ENCODE measurements at regions of chr17 and their contacts with region 1.

Region 1: DNA sequence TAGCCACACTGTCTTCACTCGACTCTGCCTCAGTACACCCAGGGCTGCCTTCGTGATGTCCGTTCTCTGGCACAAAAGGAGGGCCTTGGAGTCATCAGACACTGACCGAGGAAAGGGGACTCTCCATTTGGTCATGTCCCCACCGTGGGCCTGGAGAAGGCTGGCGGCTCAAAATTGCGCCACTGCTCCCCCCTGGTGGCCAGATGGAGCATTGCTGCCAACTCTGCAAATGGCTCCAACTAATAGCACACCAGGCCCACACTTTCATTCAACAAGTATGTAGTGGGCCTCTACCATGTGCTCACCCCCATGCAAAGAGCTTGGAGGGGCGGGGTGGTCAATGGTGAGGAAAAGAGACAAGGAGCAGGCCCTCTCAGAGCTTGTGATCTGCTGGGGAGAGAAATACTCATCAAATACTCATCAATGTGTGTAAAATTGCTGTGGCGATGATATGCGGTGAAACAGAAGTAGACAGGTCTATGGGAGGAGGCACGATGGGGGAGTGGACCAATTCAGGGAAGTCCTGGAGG is 5.2 kb upstream of the GRIN2C start:
- DNase-seq: peak; percentile 83
- ATAC-seq: peak; percentile 75
- H3K4me3 Mint-ChIP-seq: no peak overlapping the region
- H3K27ac Mint-ChIP-seq: no peak overlapping the region
- H3K4me1 Mint-ChIP-seq: peaks cover 18% of the 10 kb centered on the region
- H3K27me3 Mint-ChIP-seq: peaks cover 17% of the 10 kb centered on the region
- CTCF ChIP-seq: peak; percentile 90

Region 2: DNA sequence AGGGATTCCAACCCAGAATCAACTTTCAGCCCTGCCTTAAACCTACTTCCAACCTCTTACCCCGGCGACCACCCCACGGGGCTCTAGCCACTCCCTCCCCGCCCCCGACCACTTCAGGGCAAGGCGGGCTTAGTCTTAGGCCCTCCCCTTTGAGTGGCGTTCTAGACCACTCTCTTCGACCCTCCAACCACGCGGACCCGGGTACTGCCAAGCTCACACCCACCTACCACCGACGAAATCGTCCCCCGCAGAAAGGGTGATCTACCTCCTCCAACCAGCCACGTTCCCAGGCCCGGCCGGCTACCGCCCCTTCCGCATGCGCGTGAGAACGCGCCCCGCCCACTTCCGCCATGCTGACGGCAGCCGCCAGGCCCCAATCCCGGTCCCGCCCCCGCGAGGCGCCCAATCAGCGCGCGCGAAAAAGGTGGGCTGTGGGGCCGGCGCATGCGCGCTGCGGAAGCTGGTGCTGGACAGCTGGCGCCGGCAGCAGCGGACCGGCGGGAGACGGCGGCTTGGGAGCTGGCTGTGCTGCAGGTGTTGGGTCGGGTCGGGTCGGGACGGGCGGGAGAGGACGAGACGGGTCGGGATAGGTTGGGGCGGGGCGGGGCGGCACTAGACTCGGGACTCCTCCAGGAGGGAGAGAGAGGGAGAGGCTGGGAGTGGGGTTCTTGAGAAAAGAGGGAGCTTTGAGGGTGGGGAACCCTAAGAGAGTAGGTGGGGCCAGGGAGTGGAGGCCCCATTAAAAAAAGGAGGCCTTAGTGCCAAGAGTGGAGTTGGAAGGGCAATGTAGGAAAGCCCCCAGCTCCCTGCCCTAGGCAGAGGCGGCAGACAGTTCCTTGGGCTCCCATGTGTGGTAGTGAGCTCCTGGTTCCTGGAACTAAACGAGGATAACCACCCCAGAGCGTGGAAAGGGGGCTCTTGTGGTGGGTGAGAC is 88.6 kb before region 1 on chr17 and contains the start of gene NAT9:
- CTCF ChIA-PET with region 1: interaction called, 10 read pairs
- POLR2A ChIA-PET with region 1: no interaction called
- intact Hi-C with region 1: no loop called
- DNase-seq: peak; percentile 98
- ATAC-seq: peak; percentile 75
- H3K4me3 Mint-ChIP-seq: peak within 1 kb of the TSS; percentile 100
- H3K27ac Mint-ChIP-seq: peak within 1 kb of the TSS; percentile 96
- H3K4me1 Mint-ChIP-seq: peaks cover 57% of the 10 kb centered on the region
- H3K27me3 Mint-ChIP-seq: no peaks in the 10 kb centered on the region
- CTCF ChIP-seq: no peak
- total RNA-seq, gene NAT9: 35.5 to 42.4 TPM

Region 3: GRCh38 chr17:74785096-74785980 is 79.6 kb before region 1 on chr17:
- CTCF ChIA-PET with region 1: interaction called, 247 read pairs
- POLR2A ChIA-PET with region 1: interaction called, 3 read pairs
- intact Hi-C with region 1: no loop called
- DNase-seq: peak; percentile 65
- ATAC-seq: peak; percentile 68
- H3K4me3 Mint-ChIP-seq: no peak overlapping the region
- H3K27ac Mint-ChIP-seq: peak overlapping the region; percentile 47
- H3K4me1 Mint-ChIP-seq: peaks cover 54% of the 10 kb centered on the region
- H3K27me3 Mint-ChIP-seq: no peaks in the 10 kb centered on the region
- CTCF ChIP-seq: no peak

Region 4: DNA sequence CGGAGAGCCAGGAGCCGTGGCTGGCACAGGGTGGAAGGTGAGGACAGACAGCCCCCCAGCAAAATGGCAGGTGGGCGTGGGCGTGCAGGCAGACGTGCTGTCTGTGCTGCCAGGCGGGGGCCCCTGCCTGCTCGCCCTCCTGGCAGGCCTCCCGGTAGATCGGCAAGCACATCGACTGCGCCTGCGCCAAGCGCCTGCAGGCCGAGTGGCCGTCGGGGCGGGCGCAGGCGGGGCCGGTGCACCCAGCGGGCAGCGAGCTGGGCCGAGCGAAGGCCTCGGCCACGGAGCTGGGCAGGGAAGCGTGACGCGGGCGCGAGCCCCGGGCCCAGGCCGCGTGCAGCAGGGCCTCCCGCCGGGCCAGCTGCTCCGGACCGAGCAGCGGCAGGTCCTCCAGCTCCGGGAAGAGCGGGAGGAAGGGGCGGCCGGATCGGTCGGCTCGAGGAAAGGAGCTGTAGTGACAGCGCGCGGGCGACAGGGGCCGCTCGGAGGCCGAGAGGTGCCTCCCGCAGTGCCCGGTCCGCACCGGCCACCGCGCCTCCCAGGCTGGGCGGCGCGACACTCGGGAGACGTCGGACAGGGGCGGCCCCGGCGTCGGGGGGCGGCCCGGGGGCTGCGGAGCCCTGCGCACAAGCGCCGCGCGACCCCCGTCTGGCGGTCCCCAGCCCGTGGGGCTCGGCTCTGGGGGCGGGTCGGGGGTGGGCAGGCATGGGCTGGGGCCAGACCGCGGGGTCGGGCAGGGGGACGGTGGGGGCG is 22.2 kb before region 1 on chr17:
- CTCF ChIA-PET with region 1: interaction called, 101 read pairs
- POLR2A ChIA-PET with region 1: interaction called, 5 read pairs
- intact Hi-C with region 1: no loop called
- DNase-seq: peak; percentile 35
- ATAC-seq: peak; percentile 70
- H3K4me3 Mint-ChIP-seq: no peak overlapping the region
- H3K27ac Mint-ChIP-seq: no peak overlapping the region
- H3K4me1 Mint-ChIP-seq: peaks cover 20% of the 10 kb centered on the region
- H3K27me3 Mint-ChIP-seq: peaks cover 14% of the 10 kb centered on the region
- CTCF ChIP-seq: peak; percentile 54

Region 5: DNA sequence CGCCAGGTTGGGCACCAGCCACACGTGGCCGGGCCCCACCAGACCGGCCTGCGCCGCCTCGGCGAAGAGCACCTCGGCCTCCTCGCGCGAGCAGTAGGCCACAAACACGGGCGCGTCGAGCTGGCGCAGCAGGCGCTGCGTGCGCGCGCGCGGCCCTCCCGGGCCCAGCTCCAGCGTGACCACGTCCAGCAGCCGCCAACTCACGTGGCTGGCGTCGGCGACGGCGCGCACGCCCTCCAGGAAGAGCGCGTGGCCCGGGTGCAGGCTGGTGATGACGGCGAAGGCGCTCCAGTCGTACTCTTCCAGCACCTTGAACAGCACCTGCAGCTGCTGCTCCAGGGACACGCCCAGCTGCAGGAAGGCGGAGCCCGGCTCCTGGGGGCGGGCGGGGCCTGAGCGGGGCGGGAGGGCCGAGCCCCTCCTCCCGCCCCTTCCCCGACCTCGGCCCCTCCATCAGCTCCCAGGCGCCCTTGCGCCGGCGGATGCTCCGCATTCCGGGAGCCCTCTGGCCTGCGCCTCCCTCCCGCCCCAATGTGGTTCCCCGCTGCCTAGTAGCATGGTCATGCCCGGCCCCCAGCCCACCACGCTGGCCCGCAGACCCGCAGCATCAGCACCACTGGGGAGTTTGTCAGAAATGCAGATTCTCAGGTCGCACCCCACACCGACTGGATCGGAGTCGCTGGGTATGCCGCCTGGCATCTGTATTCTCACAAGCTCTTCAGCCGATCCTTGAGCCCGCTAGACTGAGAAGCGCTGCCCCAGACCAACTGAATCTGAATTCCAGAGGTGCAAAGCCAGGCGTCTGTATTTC is 12.5 kb before region 1 on chr17:
- CTCF ChIA-PET with region 1: interaction called, 139 read pairs
- POLR2A ChIA-PET with region 1: interaction called, 3 read pairs
- intact Hi-C with region 1: no loop called
- DNase-seq: peak; percentile 53
- ATAC-seq: peak; percentile 84
- H3K4me3 Mint-ChIP-seq: peak overlapping the region; percentile 57
- H3K27ac Mint-ChIP-seq: no peak overlapping the region
- H3K4me1 Mint-ChIP-seq: peaks cover 2% of the 10 kb centered on the region
- H3K27me3 Mint-ChIP-seq: peaks cover 49% of the 10 kb centered on the region
- CTCF ChIP-seq: no peak

Region 6: DNA sequence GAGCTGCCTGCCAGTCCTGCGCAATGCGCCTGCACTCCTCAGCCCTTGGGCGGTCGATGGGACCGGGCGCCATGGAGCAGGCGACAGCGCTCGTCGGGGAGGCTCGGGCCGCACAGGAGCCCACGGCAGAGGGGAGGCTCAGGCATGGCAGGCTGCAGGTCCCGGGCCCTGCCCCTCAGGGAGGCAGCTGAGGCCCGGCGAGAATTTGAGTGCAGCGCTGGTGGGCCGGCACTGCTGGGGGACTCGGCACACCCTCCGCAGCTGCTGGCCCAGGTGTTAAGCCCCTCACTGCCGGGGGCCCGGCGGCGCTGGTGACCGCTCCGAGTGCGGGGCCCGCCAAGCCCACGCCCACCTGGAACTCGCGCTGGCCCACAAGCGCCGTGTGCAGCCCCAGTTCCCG is 42.1 kb after region 1 on chr17:
- CTCF ChIA-PET with region 1: no interaction called
- POLR2A ChIA-PET with region 1: no interaction called
- intact Hi-C with region 1: no loop called
- DNase-seq: no peak
- ATAC-seq: no peak
- H3K4me3 Mint-ChIP-seq: no peak overlapping the region
- H3K27ac Mint-ChIP-seq: no peak overlapping the region
- H3K4me1 Mint-ChIP-seq: no peaks in the 10 kb centered on the region
- H3K27me3 Mint-ChIP-seq: peaks cover 11% of the 10 kb centered on the region
- CTCF ChIP-seq: no peak

Measured in activated CD8-positive, alpha-beta T cell treated with anti-CD3 and anti-CD28 coated beads for 36 hours (primary cell).